HCT116 (cell line): ENCODE measurements at regions of chr3 and their contacts with region 1.

Region 1: DNA sequence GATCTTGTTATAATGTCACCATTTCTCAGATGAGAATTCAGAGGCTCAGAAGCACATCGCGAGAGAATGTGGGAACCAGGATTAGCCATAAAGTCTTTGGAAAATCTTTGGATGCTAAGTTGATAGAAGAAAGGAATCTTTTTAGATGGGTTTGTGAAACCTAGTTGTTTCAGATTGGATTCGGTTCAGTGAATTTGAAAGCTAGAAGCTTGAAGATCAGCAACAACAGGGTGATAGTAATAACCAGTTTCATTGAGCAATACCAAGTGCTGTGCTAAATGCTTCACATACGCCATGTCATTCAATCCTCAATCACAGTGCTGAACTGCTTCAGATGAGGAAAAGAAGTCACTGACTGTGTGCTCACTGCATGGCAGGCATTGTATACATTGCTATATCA is 47.4 kb upstream of the MITF start:
- DNase-seq: no peak
- ATAC-seq: no peak
- H3K4me3 ChIP-seq: no peak overlapping the region
- H3K27ac ChIP-seq: no peak overlapping the region
- H3K4me1 ChIP-seq: no peaks in the 10 kb centered on the region
- H3K27me3 ChIP-seq: 0 out of 2 replicates have a peak, but pooled peaks cover 6% of the 10 kb centered on the region
- CTCF ChIP-seq: no peak
- POLR2A ChIP-seq: no peak
- RAD21 ChIP-seq: no peak

Region 2: DNA sequence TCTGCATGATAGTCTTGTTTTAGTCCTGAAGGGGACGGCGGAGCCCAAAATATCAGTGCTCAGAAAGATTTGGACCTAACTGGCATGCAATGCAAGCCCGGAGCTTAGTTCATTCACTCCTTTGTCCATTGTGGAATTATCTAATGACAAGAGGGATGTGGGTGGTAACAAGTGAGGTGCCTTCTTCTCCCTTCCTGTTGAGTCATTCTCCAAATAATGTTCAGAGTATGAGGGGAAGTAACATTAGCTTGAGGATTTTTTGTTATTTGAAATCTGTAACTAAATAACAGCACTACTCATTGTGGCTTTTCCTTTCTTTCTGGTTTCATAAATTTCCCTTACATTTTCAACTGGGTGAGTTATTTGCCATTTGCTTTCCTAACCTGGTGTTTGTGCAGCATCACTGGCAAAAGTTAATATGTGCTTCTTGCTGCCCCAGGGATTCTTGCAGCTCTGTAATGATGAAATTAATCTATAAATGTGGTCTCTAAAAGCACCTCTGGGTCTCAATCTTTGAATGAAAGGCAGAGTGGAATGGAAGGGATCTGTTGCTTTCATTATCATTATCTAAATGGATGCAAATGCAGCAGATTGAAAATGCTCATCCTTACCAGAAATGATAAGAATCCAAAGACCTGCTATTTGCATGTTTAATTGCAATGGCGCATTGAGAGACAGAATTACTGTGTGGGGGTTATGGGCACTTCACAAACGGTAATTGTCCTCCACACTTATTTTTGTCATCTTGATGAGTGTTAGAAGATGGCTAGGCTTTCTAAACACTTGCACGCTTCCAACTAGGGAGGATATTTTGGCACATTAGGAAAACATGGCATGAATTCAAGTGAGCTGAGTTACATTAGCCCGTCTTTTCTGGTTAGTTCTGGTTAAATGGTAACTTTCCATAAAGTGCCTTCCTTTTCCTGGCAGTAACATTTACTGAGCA is 42.5 kb before region 1 on chr3:
- CTCF ChIA-PET with region 1: no interaction called
- POLR2A ChIA-PET with region 1: no interaction called
- RAD21 ChIA-PET with region 1: no interaction called
- intact Hi-C with region 1: no loop called
- DNase-seq: no peak
- ATAC-seq: no peak
- H3K4me3 ChIP-seq: no peak overlapping the region
- H3K27ac ChIP-seq: no peak overlapping the region
- H3K4me1 ChIP-seq: no peaks in the 10 kb centered on the region
- H3K27me3 ChIP-seq: peaks cover 4% of the 10 kb centered on the region; the same call in 1 of the 2 replicates
- CTCF ChIP-seq: no peak
- POLR2A ChIP-seq: no peak
- RAD21 ChIP-seq: no peak

Region 3: DNA sequence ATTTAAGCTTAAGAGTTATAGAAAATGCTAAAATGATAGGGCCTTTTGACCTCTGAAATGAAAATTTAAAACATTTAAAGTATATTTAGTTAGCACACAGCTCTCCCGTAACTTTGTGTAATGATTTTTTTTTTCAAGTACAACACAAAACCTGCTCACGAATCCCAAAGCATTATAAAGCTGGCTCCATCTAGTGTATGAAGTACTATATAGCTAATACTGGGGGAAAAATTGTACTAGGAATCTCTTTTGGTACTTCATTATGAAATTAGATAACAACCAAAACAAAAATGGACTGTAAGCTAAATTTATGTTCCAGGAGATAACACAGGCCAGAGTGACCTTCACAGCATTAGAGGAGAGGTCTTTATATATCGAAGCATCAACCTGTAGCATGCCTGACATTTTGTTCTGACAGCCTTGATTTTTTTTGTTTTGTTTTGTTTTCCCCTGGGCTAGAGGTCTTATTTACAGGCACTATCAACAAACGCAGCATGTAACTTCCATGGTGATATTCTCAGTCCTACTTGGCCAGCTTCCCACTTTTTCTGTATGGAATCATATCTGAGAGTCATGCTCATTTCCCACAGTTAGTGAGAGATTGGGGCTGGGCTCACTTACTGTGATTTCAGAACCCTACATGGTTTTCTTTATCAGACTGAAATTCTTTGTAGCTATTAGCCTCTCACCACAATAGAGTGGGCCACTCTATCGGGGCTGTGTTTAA is 163.7 kb after region 1 on chr3:
- CTCF ChIA-PET with region 1: interaction called, 9 read pairs
- POLR2A ChIA-PET with region 1: no interaction called
- RAD21 ChIA-PET with region 1: no interaction called
- intact Hi-C with region 1: loop called (anchors 10 kb)
- DNase-seq: no peak
- ATAC-seq: no peak
- H3K4me3 ChIP-seq: no peak overlapping the region
- H3K27ac ChIP-seq: no peak overlapping the region
- H3K4me1 ChIP-seq: no peaks in the 10 kb centered on the region
- H3K27me3 ChIP-seq: no peaks in the 10 kb centered on the region
- CTCF ChIP-seq: peak in 1 of 3 experiments; percentile 7; a peak in 2 of 6 replicates
- POLR2A ChIP-seq: no peak
- RAD21 ChIP-seq: no peak; the same call in 1 of the 2 replicates

Region 4: GRCh38 chr3:69948246-69948862 is 256.5 kb after region 1 on chr3:
- CTCF ChIA-PET with region 1: interaction called, 4 read pairs
- POLR2A ChIA-PET with region 1: no interaction called
- RAD21 ChIA-PET with region 1: interaction called in 1 of 2 experiments, 3 read pairs
- intact Hi-C with region 1: loop called (anchors 1 kb)
- DNase-seq: peak; percentile 6
- ATAC-seq: no peak
- H3K4me3 ChIP-seq: no peak overlapping the region
- H3K27ac ChIP-seq: no peak overlapping the region
- H3K4me1 ChIP-seq: no peaks in the 10 kb centered on the region
- H3K27me3 ChIP-seq: no peaks in the 10 kb centered on the region
- CTCF ChIP-seq: peak; percentile 37 to 48 (median 44); a peak in 5 of 6 replicates
- POLR2A ChIP-seq: no peak
- RAD21 ChIP-seq: peak; percentile 49

Region 5: GRCh38 chr3:70149714-70150400 is 458.0 kb after region 1 on chr3:
- CTCF ChIA-PET with region 1: no interaction called
- POLR2A ChIA-PET with region 1: no interaction called
- RAD21 ChIA-PET with region 1: no interaction called
- intact Hi-C with region 1: no loop called
- DNase-seq: no peak
- ATAC-seq: no peak
- H3K4me3 ChIP-seq: no peak overlapping the region
- H3K27ac ChIP-seq: no peak overlapping the region
- H3K4me1 ChIP-seq: no peaks in the 10 kb centered on the region
- H3K27me3 ChIP-seq: no peaks in the 10 kb centered on the region
- CTCF ChIP-seq: no peak
- POLR2A ChIP-seq: no peak
- RAD21 ChIP-seq: no peak